ENCODE measurements at regions of chr2 and their contacts with region 1.

Region 1: GRCh38 chr2:218292048-218293014 is at the start of gene TMBIM1:
- DNase-seq: peak; percentile 75 to 94
- H3K4me3 ChIP-seq: peak within 1 kb of the TSS; percentile 97
- H3K4me3 Mint-ChIP-seq: peak within 1 kb of the TSS; percentile 86
- H3K27ac Mint-ChIP-seq: peak within 1 kb of the TSS; percentile 100
- H3K4me1 ChIP-seq: peaks cover 83% of the 10 kb centered on the region
- H3K4me1 Mint-ChIP-seq: peaks cover 56% of the 10 kb centered on the region
- H3K27me3 ChIP-seq: no peaks in the 10 kb centered on the region
- H3K27me3 Mint-ChIP-seq: no peaks in the 10 kb centered on the region
- CTCF ChIP-seq: peak; percentile 49 to 95
- total RNA-seq, gene TMBIM1: 168 and 175 TPM in 2 replicates

Region 2: GRCh38 chr2:218186355-218186766 is 106.0 kb before region 1 on chr2:
- CTCF ChIA-PET with region 1: no interaction called
- POLR2A ChIA-PET with region 1: no interaction called
- intact Hi-C with region 1: no loop called
- DNase-seq: peak; percentile 78 to 83
- H3K4me3 ChIP-seq: no peak overlapping the region
- H3K4me3 Mint-ChIP-seq: no peak overlapping the region
- H3K27ac Mint-ChIP-seq: no peak overlapping the region
- H3K4me1 ChIP-seq: peaks cover 13% of the 10 kb centered on the region
- H3K4me1 Mint-ChIP-seq: no peaks in the 10 kb centered on the region
- H3K27me3 ChIP-seq: no peaks in the 10 kb centered on the region; the same call in 1 of the 2 replicates
- H3K27me3 Mint-ChIP-seq: no peaks in the 10 kb centered on the region
- CTCF ChIP-seq: peak; percentile 82 to 87

Region 3: DNA sequence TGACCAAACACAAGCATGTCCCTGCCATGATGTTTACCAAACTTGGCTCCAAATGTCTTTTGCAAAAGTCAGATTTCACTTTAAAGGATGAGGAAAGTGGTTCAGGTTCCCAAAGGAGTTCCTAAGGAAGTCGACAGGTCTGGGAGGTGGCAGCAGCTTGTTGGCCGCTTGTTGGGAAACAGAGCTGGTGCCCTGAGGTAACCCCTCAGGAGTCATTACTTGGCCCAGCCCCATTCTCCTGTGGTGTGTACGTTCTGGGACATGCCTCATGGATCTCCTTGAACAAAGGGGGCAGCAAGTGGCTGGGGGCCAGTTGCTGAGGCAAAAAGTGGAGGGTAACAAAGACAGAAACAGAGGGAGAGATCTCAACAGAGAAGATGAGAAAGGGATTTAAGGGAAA is 10.9 kb before region 1 on chr2:
- CTCF ChIA-PET with region 1: interaction called, 121 read pairs
- POLR2A ChIA-PET with region 1: interaction called, 12 read pairs
- intact Hi-C with region 1: no loop called
- DNase-seq: no peak
- H3K4me3 ChIP-seq: no peak overlapping the region
- H3K4me3 Mint-ChIP-seq: peak overlapping the region; percentile 28
- H3K27ac Mint-ChIP-seq: peak overlapping the region; percentile 70
- H3K4me1 ChIP-seq: peaks cover 44% of the 10 kb centered on the region
- H3K4me1 Mint-ChIP-seq: peaks cover 27% of the 10 kb centered on the region
- H3K27me3 ChIP-seq: no peaks in the 10 kb centered on the region
- H3K27me3 Mint-ChIP-seq: no peaks in the 10 kb centered on the region
- CTCF ChIP-seq: no peak

Region 4: DNA sequence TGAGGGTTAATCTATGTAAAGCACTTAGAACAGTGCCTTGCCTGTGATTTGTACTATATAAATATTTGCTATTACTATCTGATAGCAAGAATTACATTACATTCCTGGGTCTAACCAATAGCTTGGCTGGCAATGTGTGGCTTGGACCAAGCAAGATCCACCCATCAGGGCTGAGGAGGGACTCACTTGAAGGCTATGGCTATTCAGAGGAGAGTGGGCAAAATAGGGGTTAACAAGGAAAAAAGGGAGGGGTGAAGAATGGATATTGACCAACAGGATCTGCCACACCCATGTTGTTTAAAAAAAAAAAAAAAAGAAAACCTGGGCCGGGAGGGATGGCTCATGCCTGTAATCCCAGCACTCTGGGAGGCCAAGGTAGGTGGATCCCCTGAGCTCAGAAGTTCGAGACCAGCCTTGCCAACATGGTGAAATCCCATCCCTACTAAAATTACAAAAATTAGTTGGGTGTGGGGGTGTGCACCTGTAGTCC is 20.0 kb after region 1 on chr2:
- CTCF ChIA-PET with region 1: interaction called, 10 read pairs
- POLR2A ChIA-PET with region 1: interaction called, 17 read pairs
- intact Hi-C with region 1: loop called (anchors 1 kb)
- DNase-seq: peak; percentile 91 to 96
- H3K4me3 ChIP-seq: no peak overlapping the region
- H3K4me3 Mint-ChIP-seq: peak overlapping the region; percentile 56
- H3K27ac Mint-ChIP-seq: peak overlapping the region; percentile 87
- H3K4me1 ChIP-seq: peaks cover 55% of the 10 kb centered on the region
- H3K4me1 Mint-ChIP-seq: peaks cover 32% of the 10 kb centered on the region
- H3K27me3 ChIP-seq: no peaks in the 10 kb centered on the region
- H3K27me3 Mint-ChIP-seq: no peaks in the 10 kb centered on the region
- CTCF ChIP-seq: no peak

Region 5: GRCh38 chr2:218322895-218323808 is 30.8 kb after region 1 on chr2:
- CTCF ChIA-PET with region 1: interaction called, 9 read pairs
- POLR2A ChIA-PET with region 1: interaction called, 13 read pairs
- intact Hi-C with region 1: no loop called
- DNase-seq: peak; percentile 86 to 88
- H3K4me3 ChIP-seq: peak overlapping the region; percentile 66
- H3K4me3 Mint-ChIP-seq: peak overlapping the region; percentile 92
- H3K27ac Mint-ChIP-seq: peak overlapping the region; percentile 85
- H3K4me1 ChIP-seq: peaks cover 21% of the 10 kb centered on the region
- H3K4me1 Mint-ChIP-seq: peaks cover 15% of the 10 kb centered on the region
- H3K27me3 ChIP-seq: no peaks in the 10 kb centered on the region
- H3K27me3 Mint-ChIP-seq: no peaks in the 10 kb centered on the region
- CTCF ChIP-seq: no peak

Region 6: GRCh38 chr2:218334531-218334930 is 42.2 kb after region 1 on chr2:
- CTCF ChIA-PET with region 1: no interaction called
- POLR2A ChIA-PET with region 1: no interaction called
- intact Hi-C with region 1: no loop called
- DNase-seq: no peak
- H3K4me3 ChIP-seq: no peak overlapping the region
- H3K4me3 Mint-ChIP-seq: no peak overlapping the region
- H3K27ac Mint-ChIP-seq: no peak overlapping the region
- H3K4me1 ChIP-seq: peaks cover 6% of the 10 kb centered on the region
- H3K4me1 Mint-ChIP-seq: peaks cover 12% of the 10 kb centered on the region
- H3K27me3 ChIP-seq: no peaks in the 10 kb centered on the region
- H3K27me3 Mint-ChIP-seq: no peaks in the 10 kb centered on the region
- CTCF ChIP-seq: no peak

Region 7: DNA sequence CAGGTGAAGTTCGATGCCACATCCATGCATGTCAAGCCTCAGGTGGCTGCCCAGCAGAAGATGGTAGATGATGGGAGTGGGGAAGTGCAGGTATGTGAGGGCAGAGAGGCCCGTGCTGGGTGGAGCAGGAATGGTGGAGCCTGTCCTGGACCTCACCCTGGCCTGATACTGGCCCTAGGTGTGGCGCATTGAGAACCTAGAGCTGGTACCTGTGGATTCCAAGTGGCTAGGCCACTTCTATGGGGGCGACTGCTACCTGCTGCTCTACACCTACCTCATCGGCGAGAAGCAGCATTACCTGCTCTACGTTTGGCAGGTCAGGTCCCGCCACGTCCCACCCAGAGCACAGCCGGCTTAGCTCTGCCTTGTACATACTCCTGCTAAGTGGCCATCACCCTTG is 139.5 kb after region 1 on chr2:
- CTCF ChIA-PET with region 1: no interaction called
- POLR2A ChIA-PET with region 1: interaction called, 14 read pairs
- intact Hi-C with region 1: no loop called
- DNase-seq: peak in 1 of 2 experiments; percentile 22
- H3K4me3 ChIP-seq: no peak overlapping the region
- H3K4me3 Mint-ChIP-seq: no peak overlapping the region
- H3K27ac Mint-ChIP-seq: no peak overlapping the region
- H3K4me1 ChIP-seq: no peaks in the 10 kb centered on the region
- H3K4me1 Mint-ChIP-seq: peaks cover 6% of the 10 kb centered on the region
- H3K27me3 ChIP-seq: no peaks in the 10 kb centered on the region
- H3K27me3 Mint-ChIP-seq: no peaks in the 10 kb centered on the region
- CTCF ChIP-seq: no peak

Region 8: GRCh38 chr2:218452079-218452478 is 159.7 kb after region 1 on chr2:
- CTCF ChIA-PET with region 1: no interaction called
- POLR2A ChIA-PET with region 1: no interaction called
- intact Hi-C with region 1: no loop called
- DNase-seq: no peak
- H3K4me3 ChIP-seq: no peak overlapping the region
- H3K4me3 Mint-ChIP-seq: no peak overlapping the region
- H3K27ac Mint-ChIP-seq: no peak overlapping the region
- H3K4me1 ChIP-seq: peaks cover 30% of the 10 kb centered on the region
- H3K4me1 Mint-ChIP-seq: peaks cover 27% of the 10 kb centered on the region
- H3K27me3 ChIP-seq: no peaks in the 10 kb centered on the region
- H3K27me3 Mint-ChIP-seq: no peaks in the 10 kb centered on the region
- CTCF ChIP-seq: no peak

Region 9: GRCh38 chr2:218568190-218569037 is 276.1 kb after region 1 on chr2 and contains the starts of genes CNOT9 and USP37:
- CTCF ChIA-PET with region 1: no interaction called
- POLR2A ChIA-PET with region 1: no interaction called
- intact Hi-C with region 1: loop called (anchors 10 kb)
- DNase-seq: peak; percentile 99 to 100
- H3K4me3 ChIP-seq: peak within 1 kb of the TSS; percentile 64
- H3K4me3 Mint-ChIP-seq: peak within 1 kb of the TSS; percentile 86
- H3K27ac Mint-ChIP-seq: peak within 1 kb of the TSS; percentile 86
- H3K4me1 ChIP-seq: peaks cover 15% of the 10 kb centered on the region
- H3K4me1 Mint-ChIP-seq: peaks cover 36% of the 10 kb centered on the region
- H3K27me3 ChIP-seq: no peaks in the 10 kb centered on the region
- H3K27me3 Mint-ChIP-seq: no peaks in the 10 kb centered on the region
- CTCF ChIP-seq: no peak
- total RNA-seq, gene CNOT9: 56.4 and 59.9 TPM in 2 replicates
- total RNA-seq, gene USP37: 18.6 and 22.2 TPM in 2 replicates